Naive thymus-derived CD4-positive, alpha-beta T cell (primary cell): ENCODE measurements at regions of chr10 and their contacts with region 1.

Region 1: GRCh38 chr10:68720793-68721672 is at the start of gene CCAR1:
- DNase-seq: peak; percentile 86 to 97 (median 96)
- ATAC-seq: peak; percentile 99
- H3K4me3 ChIP-seq: peak within 1 kb of the TSS; percentile 64
- H3K4me3 Mint-ChIP-seq: peak within 1 kb of the TSS; percentile 87 to 100 (median 96)
- H3K27ac ChIP-seq: peak within 1 kb of the TSS; percentile 96
- H3K27ac Mint-ChIP-seq: peak within 1 kb of the TSS; percentile 95 to 99 (median 98)
- H3K4me1 ChIP-seq: peaks cover 6 to 7% of the 10 kb centered on the region in 2 donors
- H3K4me1 Mint-ChIP-seq: peaks cover 10 to 23% (median 16%) of the 10 kb centered on the region in 7 donors
- H3K27me3 ChIP-seq: no peaks in the 10 kb centered on the region
- H3K27me3 Mint-ChIP-seq: peaks cover 0 to 2% (median 0%) of the 10 kb centered on the region in 5 donors
- total RNA-seq, gene CCAR1: 64.4 to 89.5 (median 88.2) TPM

Region 2: DNA sequence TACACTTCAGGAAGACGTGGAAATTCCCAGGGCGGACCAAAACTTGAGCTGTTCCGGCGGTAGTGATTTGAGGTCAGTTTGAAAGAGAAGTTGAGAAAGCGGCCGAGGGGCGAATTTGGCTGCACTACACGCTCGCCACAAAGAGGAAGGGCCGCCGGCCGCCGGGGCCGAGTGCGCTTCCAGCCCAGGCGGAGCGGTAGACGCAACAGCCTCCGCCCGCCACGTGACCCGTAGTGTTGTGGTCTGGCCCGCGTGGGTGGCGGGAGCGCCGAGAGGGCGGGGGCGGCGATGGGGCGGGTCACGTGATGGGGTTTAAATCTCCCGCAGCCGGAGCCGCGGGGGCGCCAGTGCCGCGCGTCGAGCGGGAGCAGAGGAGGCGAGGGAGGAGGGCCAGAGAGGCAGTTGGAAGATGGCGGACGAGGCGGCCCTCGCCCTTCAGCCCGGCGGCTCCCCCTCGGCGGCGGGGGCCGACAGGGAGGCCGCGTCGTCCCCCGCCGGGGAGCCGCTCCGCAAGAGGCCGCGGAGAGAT is 836.7 kb before region 1 on chr10 and contains the start of gene SIRT1:
- CTCF ChIA-PET with region 1: no interaction called
- POLR2A ChIA-PET with region 1: no interaction called
- intact Hi-C with region 1: loop called (anchors 1 to 2 kb)
- DNase-seq: peak; percentile 87 to 95 (median 90)
- ATAC-seq: peak; percentile 89
- H3K4me3 ChIP-seq: peak within 1 kb of the TSS; percentile 75
- H3K4me3 Mint-ChIP-seq: peak within 1 kb of the TSS; percentile 86 to 98 (median 95)
- H3K27ac ChIP-seq: peak within 1 kb of the TSS; percentile 83
- H3K27ac Mint-ChIP-seq: peak within 1 kb of the TSS; percentile 90 to 98 (median 95)
- H3K4me1 ChIP-seq: peaks cover 12 to 16% of the 10 kb centered on the region in 2 donors
- H3K4me1 Mint-ChIP-seq: peaks cover 27 to 43% (median 35%) of the 10 kb centered on the region in 7 donors
- H3K27me3 ChIP-seq: no peaks in the 10 kb centered on the region
- H3K27me3 Mint-ChIP-seq: peaks cover 0 to 5% (median 0%) of the 10 kb centered on the region in 5 donors
- total RNA-seq, gene SIRT1: 25.9 to 66.8 (median 59.5) TPM

Region 3: GRCh38 chr10:68208424-68209042 is 512.5 kb before region 1 on chr10:
- CTCF ChIA-PET with region 1: no interaction called
- POLR2A ChIA-PET with region 1: no interaction called
- intact Hi-C with region 1: loop called in 1 of 2 experiments (anchors 10 kb)
- DNase-seq: no peak
- ATAC-seq: no peak
- H3K4me3 ChIP-seq: no peak overlapping the region
- H3K4me3 Mint-ChIP-seq: no peak overlapping the region
- H3K27ac ChIP-seq: no peak overlapping the region
- H3K27ac Mint-ChIP-seq: peak overlapping the region in 1 of 9 donors; percentile 22
- H3K4me1 ChIP-seq: no peaks in the 10 kb centered on the region
- H3K4me1 Mint-ChIP-seq: peaks cover 0 to 4% (median 0%) of the 10 kb centered on the region in 7 donors
- H3K27me3 ChIP-seq: no peaks in the 10 kb centered on the region
- H3K27me3 Mint-ChIP-seq: peaks cover 0 to 36% (median 10%) of the 10 kb centered on the region in 5 donors

Region 4: GRCh38 chr10:68471586-68472408 is 249.2 kb before region 1 on chr10 and contains the start of gene DNA2:
- CTCF ChIA-PET with region 1: no interaction called
- POLR2A ChIA-PET with region 1: no interaction called
- intact Hi-C with region 1: loop called in 1 of 2 experiments (anchors 1 kb)
- DNase-seq: peak; percentile 54 to 85 (median 67)
- ATAC-seq: peak; percentile 84
- H3K4me3 ChIP-seq: peak within 1 kb of the TSS; percentile 72
- H3K4me3 Mint-ChIP-seq: peak within 1 kb of the TSS; percentile 95 to 100 (median 98)
- H3K27ac ChIP-seq: peak within 1 kb of the TSS; percentile 69
- H3K27ac Mint-ChIP-seq: peak within 1 kb of the TSS; percentile 54 to 99 (median 86)
- H3K4me1 ChIP-seq: peaks cover 0 to 5% of the 10 kb centered on the region in 2 donors
- H3K4me1 Mint-ChIP-seq: peaks cover 6 to 26% (median 14%) of the 10 kb centered on the region in 7 donors
- H3K27me3 ChIP-seq: no peaks in the 10 kb centered on the region
- H3K27me3 Mint-ChIP-seq: no peaks in the 10 kb centered on the region
- total RNA-seq, gene DNA2: 3.8 to 40.2 (median 6.3) TPM

Region 5: GRCh38 chr10:68550747-68551411 is 170.2 kb before region 1 on chr10:
- CTCF ChIA-PET with region 1: interaction called, 7 read pairs
- POLR2A ChIA-PET with region 1: interaction called, 4 read pairs
- intact Hi-C with region 1: loop called (anchors 1 to 5 kb)
- DNase-seq: peak in 8 of 9 donors; percentile 18 to 55 (median 42)
- ATAC-seq: peak; percentile 83
- H3K4me3 ChIP-seq: no peak overlapping the region
- H3K4me3 Mint-ChIP-seq: no peak overlapping the region
- H3K27ac ChIP-seq: no peak overlapping the region
- H3K27ac Mint-ChIP-seq: peak overlapping the region in 1 of 9 donors; percentile 3
- H3K4me1 ChIP-seq: no peaks in the 10 kb centered on the region
- H3K4me1 Mint-ChIP-seq: peaks cover 0 to 5% (median 0%) of the 10 kb centered on the region in 7 donors
- H3K27me3 ChIP-seq: no peaks in the 10 kb centered on the region
- H3K27me3 Mint-ChIP-seq: peaks cover 0 to 6% (median 0%) of the 10 kb centered on the region in 5 donors

Region 6: GRCh38 chr10:68826764-68827591 is 105.9 kb after region 1 on chr10 and contains the start of gene STOX1:
- CTCF ChIA-PET with region 1: no interaction called
- POLR2A ChIA-PET with region 1: interaction called, 4 read pairs
- intact Hi-C with region 1: loop called in 1 of 2 experiments (anchors 2 kb)
- DNase-seq: peak; percentile 30 to 76 (median 60)
- ATAC-seq: peak; percentile 76
- H3K4me3 ChIP-seq: peak within 1 kb of the TSS; percentile 74
- H3K4me3 Mint-ChIP-seq: peak within 1 kb of the TSS; percentile 69 to 85 (median 81)
- H3K27ac ChIP-seq: peak within 1 kb of the TSS; percentile 61
- H3K27ac Mint-ChIP-seq: peak within 1 kb of the TSS in 6 of 9 donors; percentile 19 to 90 (median 56)
- H3K4me1 ChIP-seq: peaks cover 5 to 18% of the 10 kb centered on the region in 2 donors
- H3K4me1 Mint-ChIP-seq: peaks cover 0 to 33% (median 25%) of the 10 kb centered on the region in 7 donors
- H3K27me3 ChIP-seq: no peaks in the 10 kb centered on the region
- H3K27me3 Mint-ChIP-seq: peaks cover 0 to 28% (median 0%) of the 10 kb centered on the region in 5 donors
- total RNA-seq, gene STOX1: 0.29 to 1.2 (median 0.79) TPM

Region 7: DNA sequence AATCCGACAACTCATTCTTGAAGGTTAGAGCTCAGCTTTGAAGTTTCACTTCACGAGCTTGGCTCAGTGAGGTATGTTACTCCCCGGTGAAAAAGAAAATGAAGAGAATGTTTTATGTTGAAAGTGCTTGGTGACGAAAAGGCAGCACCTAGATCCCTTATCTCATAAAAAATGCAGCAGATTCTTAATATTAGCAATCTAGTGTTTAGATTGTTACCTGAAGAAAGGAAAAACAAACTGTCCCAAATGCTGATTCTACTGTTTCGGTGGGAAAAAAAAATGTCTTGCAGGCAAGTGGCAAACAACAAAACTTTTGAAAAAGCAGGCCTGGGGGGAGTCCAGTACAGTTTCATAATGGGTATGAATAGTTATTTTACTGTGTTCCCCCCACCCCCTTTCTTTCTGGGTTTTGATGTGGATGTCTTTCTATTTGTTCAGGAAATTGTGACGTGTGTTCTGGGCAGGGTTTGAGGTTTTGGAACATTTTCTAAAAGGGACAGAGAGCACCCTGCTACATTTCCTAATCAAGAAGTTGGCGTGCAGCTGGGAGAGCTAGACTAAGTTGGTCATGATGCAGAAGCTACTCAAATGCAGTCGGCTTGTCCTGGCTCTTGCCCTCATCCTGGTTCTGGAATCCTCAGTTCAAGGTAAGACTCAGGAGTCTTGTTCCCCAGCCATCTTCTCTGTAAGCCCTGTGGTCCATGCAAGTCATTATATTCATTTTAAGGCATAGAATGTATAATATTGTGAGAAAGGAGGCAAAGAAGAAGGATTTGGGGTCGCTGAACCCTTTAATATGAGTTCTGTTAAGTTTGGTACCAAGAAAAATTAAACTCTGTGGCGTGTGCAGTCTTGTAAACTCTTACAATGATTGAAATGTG is 366.8 kb after region 1 on chr10 and contains the start of gene SRGN:
- CTCF ChIA-PET with region 1: no interaction called
- POLR2A ChIA-PET with region 1: no interaction called
- intact Hi-C with region 1: loop called in 1 of 2 experiments (anchors 1 kb)
- DNase-seq: peak; percentile 54 to 94 (median 87)
- ATAC-seq: peak; percentile 76
- H3K4me3 ChIP-seq: peak within 1 kb of the TSS; percentile 84
- H3K4me3 Mint-ChIP-seq: peak within 1 kb of the TSS; percentile 85 to 95 (median 93)
- H3K27ac ChIP-seq: peak within 1 kb of the TSS; percentile 97
- H3K27ac Mint-ChIP-seq: peak within 1 kb of the TSS; percentile 93 to 99 (median 98)
- H3K4me1 ChIP-seq: peaks cover 28 to 46% of the 10 kb centered on the region in 2 donors
- H3K4me1 Mint-ChIP-seq: peaks cover 25 to 66% (median 58%) of the 10 kb centered on the region in 7 donors
- H3K27me3 ChIP-seq: no peaks in the 10 kb centered on the region
- H3K27me3 Mint-ChIP-seq: no peaks in the 10 kb centered on the region
- total RNA-seq, gene SRGN: 66.6 to 748 (median 227) TPM

Region 8: GRCh38 chr10:70060389-70060788 is 1339.4 kb after region 1 on chr10:
- CTCF ChIA-PET with region 1: no interaction called
- POLR2A ChIA-PET with region 1: no interaction called
- intact Hi-C with region 1: no loop called
- DNase-seq: no peak
- ATAC-seq: no peak
- H3K4me3 ChIP-seq: no peak overlapping the region
- H3K4me3 Mint-ChIP-seq: no peak overlapping the region
- H3K27ac ChIP-seq: no peak overlapping the region
- H3K27ac Mint-ChIP-seq: no peak overlapping the region
- H3K4me1 ChIP-seq: no peaks in the 10 kb centered on the region
- H3K4me1 Mint-ChIP-seq: no peaks in the 10 kb centered on the region
- H3K27me3 ChIP-seq: no peaks in the 10 kb centered on the region
- H3K27me3 Mint-ChIP-seq: peaks cover 3 to 20% (median 7%) of the 10 kb centered on the region in 5 donors